ENCODE measurements at regions of chr5 and their contacts with region 1.

Region 1: DNA sequence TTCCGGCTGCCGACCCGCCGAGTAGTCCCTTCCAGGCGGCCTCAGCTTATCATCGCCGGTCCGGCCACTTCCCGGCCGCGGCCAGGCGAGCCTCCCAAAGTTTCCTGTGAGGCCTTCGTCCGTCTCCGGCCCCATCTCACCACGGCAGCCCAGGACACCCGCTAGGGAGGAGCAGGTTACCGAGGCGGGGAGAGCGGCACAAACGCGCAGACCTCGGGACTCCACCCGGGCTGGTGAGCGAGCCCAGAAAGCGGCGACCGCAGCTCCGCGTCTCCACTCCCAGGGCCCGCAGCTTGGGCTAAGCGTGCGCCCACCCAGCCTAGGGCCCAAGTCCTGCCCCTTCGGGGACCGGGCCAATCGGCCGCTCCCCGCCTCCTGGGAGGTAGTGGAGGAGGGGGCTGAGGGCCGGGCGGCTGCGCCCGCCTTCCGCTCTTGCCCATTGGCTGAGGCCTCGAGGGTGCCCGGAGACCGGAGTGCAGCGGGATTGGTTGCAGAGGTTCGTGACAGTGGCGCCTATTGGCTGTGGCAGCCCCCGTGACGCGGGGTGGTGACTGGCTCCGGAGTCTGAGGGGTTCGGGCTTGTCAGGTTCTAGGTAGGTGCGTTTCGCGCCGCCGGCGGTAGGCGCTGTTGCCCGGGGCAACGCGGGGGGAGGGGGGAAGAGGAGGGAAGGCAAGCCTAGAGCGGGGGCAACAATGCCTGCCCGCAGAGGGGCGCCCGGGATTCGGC is 867 bp downstream of the FER start:
- DNase-seq: peak; percentile 99
- H3K4me3 Mint-ChIP-seq: peak overlapping the region; percentile 87
- H3K27ac Mint-ChIP-seq: peak overlapping the region; percentile 84
- H3K4me1 Mint-ChIP-seq: peaks cover 8% of the 10 kb centered on the region
- H3K27me3 Mint-ChIP-seq: peaks cover 37% of the 10 kb centered on the region

Region 2: DNA sequence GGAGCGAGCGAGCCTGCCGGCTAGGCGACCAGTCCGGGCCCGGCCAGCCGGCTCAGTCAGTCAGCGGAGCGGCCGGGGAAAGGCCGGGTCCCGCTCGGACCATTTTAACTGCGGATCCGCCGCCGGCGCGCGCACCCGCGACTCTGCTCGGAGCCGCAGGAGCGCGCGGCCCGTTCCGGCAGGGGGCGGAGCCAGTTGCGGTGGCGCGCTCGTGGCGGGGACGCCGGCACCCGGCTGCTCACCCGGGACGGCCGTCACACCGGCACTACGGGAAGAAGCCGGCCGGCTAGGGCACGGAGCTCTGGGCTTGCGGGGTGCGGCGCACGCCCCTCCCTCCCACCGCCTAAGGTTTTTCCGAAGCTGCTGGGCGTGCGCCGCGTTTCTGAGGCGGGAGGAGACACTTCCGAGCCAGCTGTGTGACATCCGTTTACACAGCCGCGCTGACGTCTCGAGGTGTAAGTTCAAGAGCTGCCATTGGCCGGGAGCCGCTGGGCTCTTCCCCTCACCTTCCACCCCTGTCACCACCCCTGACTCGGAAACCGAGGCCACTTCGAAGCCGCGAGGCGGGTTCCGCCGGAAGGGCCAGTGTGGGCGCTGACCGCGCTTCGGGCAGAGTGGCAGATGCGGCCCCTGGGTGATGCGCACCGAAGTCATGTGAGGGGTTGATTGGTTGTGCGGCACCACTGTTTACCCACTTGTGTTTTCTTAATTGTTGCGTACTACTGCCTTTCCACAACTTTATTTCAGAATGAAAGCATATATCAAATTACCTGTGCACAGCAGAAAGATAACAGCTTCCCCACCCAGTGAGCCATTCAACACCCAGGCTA is 366.4 kb before region 1 on chr5 and contains the start of gene FBXL17:
- intact Hi-C with region 1: loop called (anchors 5 kb)
- DNase-seq: peak; percentile 97
- H3K4me3 Mint-ChIP-seq: peak within 1 kb of the TSS; percentile 84
- H3K27ac Mint-ChIP-seq: peak within 1 kb of the TSS; percentile 91
- H3K4me1 Mint-ChIP-seq: peaks cover 22% of the 10 kb centered on the region
- H3K27me3 Mint-ChIP-seq: no peaks in the 10 kb centered on the region
- total RNA-seq, gene FBXL17: 7.5 and 8.6 TPM in 2 replicates

Region 3: DNA sequence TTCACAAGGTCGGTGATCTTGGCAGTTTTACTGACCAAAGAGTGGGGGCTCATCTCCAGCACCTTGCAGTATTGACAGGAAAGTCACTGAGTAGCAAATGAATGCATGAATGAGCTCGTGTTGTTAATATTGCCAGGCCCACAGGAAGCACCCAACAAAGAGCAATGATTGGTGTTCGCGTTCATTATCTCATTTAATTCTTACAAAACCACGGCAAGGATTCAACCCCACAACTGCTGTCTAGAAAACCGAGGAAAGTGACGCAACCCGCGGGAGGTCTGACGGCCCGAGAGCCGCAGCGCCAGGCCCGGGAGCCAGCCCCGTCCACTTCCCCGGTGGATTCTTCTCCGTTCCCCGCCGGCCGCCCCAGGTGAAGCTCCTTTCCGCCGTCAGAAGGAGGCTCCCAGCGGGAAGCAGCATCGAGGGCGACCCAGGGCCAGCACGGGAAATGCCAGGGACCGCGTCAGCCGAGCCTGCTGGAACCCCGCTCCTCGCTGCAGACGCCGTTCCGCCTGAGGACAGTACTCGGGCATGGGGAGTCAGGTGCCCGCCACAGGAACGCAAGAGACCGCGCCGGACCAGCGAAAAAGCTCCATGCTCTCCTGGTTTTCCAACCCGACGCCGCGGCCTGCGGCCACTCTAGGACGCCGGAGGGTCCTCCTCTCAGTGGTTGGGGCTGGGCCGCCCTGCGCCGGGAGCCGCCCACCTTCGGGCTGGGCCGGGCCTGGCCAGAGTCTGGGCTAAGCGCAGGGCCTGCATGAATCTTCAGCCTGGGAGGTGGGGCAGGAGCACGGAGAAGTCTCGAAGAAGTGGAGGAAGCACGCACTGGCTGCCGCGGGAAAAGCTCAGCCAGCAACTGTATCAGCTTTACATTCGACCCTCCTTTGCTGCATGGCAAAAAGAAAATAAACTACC is 20.7 kb before region 1 on chr5:
- intact Hi-C with region 1: loop called (anchors 1 kb)
- DNase-seq: peak; percentile 73
- H3K4me3 Mint-ChIP-seq: peak overlapping the region; percentile 79
- H3K27ac Mint-ChIP-seq: peak overlapping the region; percentile 43
- H3K4me1 Mint-ChIP-seq: peaks cover 19% of the 10 kb centered on the region
- H3K27me3 Mint-ChIP-seq: peaks cover 73% of the 10 kb centered on the region